IMR-90 (cell line): ENCODE measurements at regions of chrX and their contacts with region 1.

Region 1: DNA sequence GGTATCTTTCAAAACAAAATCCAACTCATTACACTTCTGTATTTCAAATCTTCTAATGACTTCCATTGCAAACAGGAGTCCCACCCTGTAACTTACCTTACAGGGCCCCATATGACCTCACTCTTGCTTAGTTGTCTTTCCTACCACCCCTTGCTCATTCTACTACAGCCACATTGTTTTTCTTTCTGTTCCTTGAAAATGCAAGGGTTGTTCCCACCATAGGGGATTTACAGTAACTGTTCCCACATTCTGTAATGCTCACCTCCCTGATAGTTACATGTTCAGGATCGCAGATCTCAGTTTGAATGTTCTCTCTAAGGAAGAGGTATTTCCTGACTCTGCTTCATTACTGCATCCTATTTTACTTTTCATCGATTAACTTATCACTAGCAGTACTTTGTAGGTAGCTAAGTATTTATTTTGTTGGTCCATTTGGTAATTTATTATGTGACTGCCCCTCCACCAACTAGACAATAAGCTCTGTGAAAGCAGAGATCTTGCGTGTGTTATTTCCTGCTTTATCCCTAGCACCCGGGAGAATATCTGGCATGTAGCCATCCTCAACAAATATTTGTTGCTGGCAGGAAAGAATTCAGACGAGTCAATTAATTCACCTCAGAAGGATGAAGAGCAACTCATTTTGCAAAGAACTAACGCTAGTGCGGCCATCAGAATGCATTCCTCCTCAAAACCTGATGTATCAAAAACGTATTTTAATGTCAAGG is 21.4 kb downstream of the MAOB start:
- DNase-seq: peak; percentile 1
- ATAC-seq: no peak
- H3K4me3 ChIP-seq: no peak overlapping the region
- H3K27ac ChIP-seq: no peak overlapping the region
- H3K4me1 ChIP-seq: no peaks in the 10 kb centered on the region
- H3K27me3 ChIP-seq: peaks cover 1% of the 10 kb centered on the region; the same call in 1 of the 2 replicates
- CTCF ChIP-seq: no peak
- POLR2A ChIP-seq: no peak
- RAD21 ChIP-seq: no peak

Region 2: GRCh38 chrX:43279341-43279808 is 581.4 kb before region 1 on chrX:
- CTCF ChIA-PET with region 1: no interaction called
- POLR2A ChIA-PET with region 1: no interaction called
- dilution Hi-C with region 1: no loop called
- in situ Hi-C with region 1: no loop called
- intact Hi-C with region 1: no loop called
- DNase-seq: no peak
- ATAC-seq: no peak
- H3K4me3 ChIP-seq: no peak overlapping the region
- H3K27ac ChIP-seq: no peak overlapping the region
- H3K4me1 ChIP-seq: no peaks in the 10 kb centered on the region
- H3K27me3 ChIP-seq: no peaks in the 10 kb centered on the region
- CTCF ChIP-seq: no peak
- POLR2A ChIP-seq: no peak
- RAD21 ChIP-seq: no peak

Region 3: DNA sequence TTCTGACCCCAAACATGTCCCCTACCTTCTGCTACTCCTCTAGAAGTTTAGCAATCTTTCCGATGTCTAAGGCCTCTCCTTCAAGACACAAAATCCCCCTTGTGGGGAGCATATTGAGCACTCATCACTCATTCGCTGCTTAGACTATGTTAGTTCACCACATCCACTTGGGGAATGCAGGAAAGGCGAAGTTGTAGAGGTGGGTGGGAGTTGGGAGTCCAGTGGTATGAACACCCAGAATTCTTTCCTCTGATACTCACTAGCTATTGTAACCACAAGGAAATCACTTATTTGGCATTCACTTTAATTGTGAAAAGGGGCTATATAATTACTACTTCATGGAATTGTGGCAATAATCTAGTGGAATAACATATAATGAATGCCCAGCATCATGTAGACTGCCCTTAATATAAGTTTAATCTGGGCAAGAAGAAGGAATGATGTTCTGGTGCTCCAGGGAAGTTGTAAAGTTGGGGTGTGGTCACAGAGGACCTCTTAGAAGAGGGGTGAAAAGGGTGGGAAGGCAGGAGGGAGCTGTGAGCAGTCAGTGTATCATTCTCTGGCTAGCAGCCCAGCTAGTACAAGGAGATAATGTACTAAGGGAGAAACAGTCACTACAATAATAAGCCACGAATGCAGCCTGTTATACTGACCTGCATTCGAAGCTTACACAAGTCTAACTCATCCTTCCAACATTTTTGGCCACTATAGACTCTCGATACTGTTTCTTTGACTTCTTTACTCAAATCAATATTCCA is 1808.1 kb after region 1 on chrX:
- CTCF ChIA-PET with region 1: no interaction called
- POLR2A ChIA-PET with region 1: interaction called, 25 read pairs
- dilution Hi-C with region 1: no loop called
- in situ Hi-C with region 1: no loop called
- intact Hi-C with region 1: no loop called
- DNase-seq: peak; percentile 95
- ATAC-seq: peak; percentile 85
- H3K4me3 ChIP-seq: no peak overlapping the region
- H3K27ac ChIP-seq: no peak overlapping the region; the same call in 1 of the 2 replicates
- H3K4me1 ChIP-seq: no peaks in the 10 kb centered on the region; the same call in 1 of the 2 replicates
- H3K27me3 ChIP-seq: no peaks in the 10 kb centered on the region; the same call in 1 of the 2 replicates
- CTCF ChIP-seq: no peak
- POLR2A ChIP-seq: no peak
- RAD21 ChIP-seq: no peak; the same call in none of the 2 replicates